HCT116 (cell line): ENCODE measurements at regions of chr16 and their contacts with region 1.

Region 1: GRCh38 chr16:69396187-69397061 is 10.6 kb upstream of the TERF2 start:
- DNase-seq: peak; percentile 88
- ATAC-seq: peak; percentile 21
- H3K4me3 ChIP-seq: peak overlapping the region in 1 of 2 experiments; percentile 16; a peak in 1 of 4 replicates
- H3K27ac ChIP-seq: peak overlapping the region; percentile 99
- H3K4me1 ChIP-seq: peaks cover 90 to 97% of the 10 kb centered on the region in 2 experiments
- H3K27me3 ChIP-seq: no peaks in the 10 kb centered on the region
- CTCF ChIP-seq: peak; percentile 63 to 71 (median 63); a peak in 4 of 6 replicates
- POLR2A ChIP-seq: no peak
- RAD21 ChIP-seq: peak; percentile 86

Region 2: GRCh38 chr16:69186642-69187445 is 209.6 kb before region 1 on chr16 and contains the start of gene SNTB2:
- CTCF ChIA-PET with region 1: no interaction called
- POLR2A ChIA-PET with region 1: no interaction called
- RAD21 ChIA-PET with region 1: no interaction called
- intact Hi-C with region 1: no loop called
- DNase-seq: peak; percentile 70
- ATAC-seq: peak; percentile 95
- H3K4me3 ChIP-seq: peak within 1 kb of the TSS; percentile 71 to 76
- H3K27ac ChIP-seq: peak within 1 kb of the TSS; percentile 82
- H3K4me1 ChIP-seq: peaks cover 23 to 41% of the 10 kb centered on the region in 2 experiments
- H3K27me3 ChIP-seq: no peaks in the 10 kb centered on the region
- CTCF ChIP-seq: no peak
- POLR2A ChIP-seq: peak; percentile 89
- RAD21 ChIP-seq: no peak
- total RNA-seq, gene SNTB2: 38.1 TPM

Region 3: DNA sequence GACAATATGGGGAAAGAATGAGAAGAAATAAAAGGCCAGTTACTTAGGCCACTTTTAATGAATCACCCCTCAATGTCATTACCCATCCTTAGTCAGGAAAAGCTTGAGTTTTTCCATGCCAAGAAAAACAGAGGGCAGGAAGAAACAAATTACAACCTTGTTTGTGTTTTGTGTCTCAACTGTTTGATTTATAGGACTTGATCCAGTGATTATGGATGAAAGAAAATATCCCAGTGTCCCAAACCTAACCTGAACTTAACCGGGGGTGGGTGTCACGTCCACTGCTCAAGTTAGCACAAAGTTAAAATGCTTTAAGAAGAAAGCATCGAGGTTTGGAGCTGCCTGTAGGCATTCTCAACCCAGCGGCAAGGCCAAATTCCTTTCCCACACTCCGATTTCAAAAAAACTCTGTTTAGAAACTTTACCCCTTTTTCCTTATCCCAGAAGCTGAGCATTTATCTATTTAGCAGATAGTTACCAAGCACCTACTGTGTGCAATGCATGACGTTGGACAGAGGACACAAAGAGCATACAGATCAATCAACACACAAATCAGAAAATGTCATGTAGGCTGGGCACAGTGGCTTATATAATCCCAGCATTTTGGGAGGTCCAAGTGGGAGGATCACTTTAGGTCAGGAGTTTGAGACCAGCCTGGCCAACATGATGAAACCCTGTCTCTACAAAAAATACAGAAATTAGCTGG is 14.0 kb after region 1 on chr16:
- CTCF ChIA-PET with region 1: interaction called, 20 read pairs
- POLR2A ChIA-PET with region 1: interaction called, 65 read pairs
- RAD21 ChIA-PET with region 1: no interaction called
- intact Hi-C with region 1: no loop called
- DNase-seq: peak; percentile 83
- ATAC-seq: peak; percentile 15
- H3K4me3 ChIP-seq: peak overlapping the region in 1 of 2 experiments; percentile 20; a peak in 2 of 4 replicates
- H3K27ac ChIP-seq: peak overlapping the region; percentile 99
- H3K4me1 ChIP-seq: peaks cover 64 to 95% of the 10 kb centered on the region in 2 experiments
- H3K27me3 ChIP-seq: no peaks in the 10 kb centered on the region
- CTCF ChIP-seq: no peak
- POLR2A ChIP-seq: no peak
- RAD21 ChIP-seq: no peak

Region 4: DNA sequence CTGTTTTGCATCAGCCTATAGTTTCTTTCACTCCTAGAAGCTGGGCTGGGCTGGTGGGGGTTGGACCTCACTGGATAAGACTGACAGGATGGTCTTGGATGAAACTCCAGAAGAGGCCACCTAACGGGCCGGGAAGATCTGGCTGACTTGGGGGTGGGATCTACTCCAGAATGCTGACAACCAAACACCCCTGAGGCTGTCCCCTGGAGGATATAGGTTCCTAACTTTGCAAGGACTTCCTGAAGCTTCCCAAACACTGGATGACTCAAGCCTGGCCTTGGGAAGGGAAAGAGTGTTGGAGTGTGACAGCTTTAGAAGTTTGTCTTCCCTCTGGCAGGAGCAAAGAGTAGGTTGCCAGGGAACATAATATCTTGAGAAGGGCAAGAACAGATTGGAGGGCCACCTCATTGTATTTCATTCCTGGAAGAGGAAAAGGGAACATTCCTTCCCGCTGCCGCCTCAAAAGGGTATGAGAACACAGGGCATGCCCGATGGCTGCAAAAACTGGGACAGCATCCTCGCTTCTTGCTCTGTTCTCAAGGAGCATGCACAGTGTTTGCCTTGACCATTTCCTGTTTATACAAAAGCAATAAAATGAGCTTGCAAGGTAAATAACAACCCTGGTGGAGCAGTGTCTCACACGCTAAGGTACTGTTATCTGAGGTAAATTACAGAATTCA is 21.2 kb after region 1 on chr16:
- CTCF ChIA-PET with region 1: interaction called, 5 read pairs
- POLR2A ChIA-PET with region 1: interaction called, 15 read pairs
- RAD21 ChIA-PET with region 1: no interaction called
- intact Hi-C with region 1: no loop called
- DNase-seq: no peak
- ATAC-seq: peak; percentile 74
- H3K4me3 ChIP-seq: no peak overlapping the region
- H3K27ac ChIP-seq: peak overlapping the region; percentile 99
- H3K4me1 ChIP-seq: peaks cover 60 to 73% of the 10 kb centered on the region in 2 experiments
- H3K27me3 ChIP-seq: no peaks in the 10 kb centered on the region
- CTCF ChIP-seq: no peak
- POLR2A ChIP-seq: peak; percentile 45
- RAD21 ChIP-seq: no peak

Region 5: GRCh38 chr16:69465083-69465721 is 68.8 kb after region 1 on chr16:
- CTCF ChIA-PET with region 1: interaction called, 10 read pairs
- POLR2A ChIA-PET with region 1: no interaction called
- RAD21 ChIA-PET with region 1: no interaction called
- intact Hi-C with region 1: no loop called
- DNase-seq: no peak
- ATAC-seq: peak; percentile 61; the same call in 1 of the 2 replicates
- H3K4me3 ChIP-seq: no peak overlapping the region
- H3K27ac ChIP-seq: peak overlapping the region; percentile 83
- H3K4me1 ChIP-seq: peaks cover 81% of the 10 kb centered on the region in 2 experiments
- H3K27me3 ChIP-seq: no peaks in the 10 kb centered on the region
- CTCF ChIP-seq: no peak
- POLR2A ChIP-seq: no peak
- RAD21 ChIP-seq: peak; percentile 48

Region 6: DNA sequence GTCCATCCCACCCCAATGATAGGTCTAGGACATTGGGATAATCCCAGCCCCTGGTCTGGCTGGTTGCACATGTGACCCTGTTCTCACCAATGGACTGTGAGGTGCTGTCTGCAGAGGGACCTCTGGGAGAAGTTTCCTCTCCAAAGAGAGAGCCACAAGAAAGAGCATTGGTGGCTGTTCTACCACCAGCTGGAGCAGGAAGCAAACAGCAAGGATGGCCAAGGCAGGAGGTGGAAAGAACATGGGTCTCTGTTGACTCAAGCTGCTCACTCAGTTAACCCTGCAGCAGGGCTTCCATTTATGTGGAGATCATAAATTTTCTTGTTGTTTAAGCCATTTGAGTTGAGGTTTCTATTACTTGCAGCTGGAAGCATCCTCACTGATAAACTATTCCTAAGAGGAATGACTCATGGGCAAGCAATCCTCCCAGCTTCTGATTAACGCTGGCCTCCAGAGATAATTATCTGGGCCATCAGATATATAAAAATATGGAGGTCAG is 80.5 kb after region 1 on chr16:
- CTCF ChIA-PET with region 1: no interaction called
- POLR2A ChIA-PET with region 1: interaction called, 3 read pairs
- RAD21 ChIA-PET with region 1: interaction called in 1 of 2 experiments, 3 read pairs
- intact Hi-C with region 1: loop called (anchors 5 kb)
- DNase-seq: peak; percentile 50
- ATAC-seq: peak; percentile 85
- H3K4me3 ChIP-seq: peak overlapping the region in 1 of 2 experiments; percentile 21; a peak in 2 of 4 replicates
- H3K27ac ChIP-seq: peak overlapping the region; percentile 83
- H3K4me1 ChIP-seq: peaks cover 85 to 93% of the 10 kb centered on the region in 2 experiments
- H3K27me3 ChIP-seq: no peaks in the 10 kb centered on the region
- CTCF ChIP-seq: no peak
- POLR2A ChIP-seq: no peak
- RAD21 ChIP-seq: peak; percentile 15; the same call in 1 of the 2 replicates

Region 7: GRCh38 chr16:69565671-69566239 is 169.3 kb after region 1 on chr16 and contains the start of gene NFAT5:
- CTCF ChIA-PET with region 1: interaction called, 3 read pairs
- POLR2A ChIA-PET with region 1: no interaction called
- RAD21 ChIA-PET with region 1: no interaction called
- intact Hi-C with region 1: loop called (anchors 5 kb)
- DNase-seq: peak; percentile 42
- ATAC-seq: peak; percentile 78
- H3K4me3 ChIP-seq: peak within 1 kb of the TSS; percentile 78 to 91
- H3K27ac ChIP-seq: peak within 1 kb of the TSS; percentile 99
- H3K4me1 ChIP-seq: peaks cover 42 to 44% of the 10 kb centered on the region in 2 experiments
- H3K27me3 ChIP-seq: no peaks in the 10 kb centered on the region
- CTCF ChIP-seq: no peak
- POLR2A ChIP-seq: peak; percentile 53
- RAD21 ChIP-seq: peak; percentile 36; the same call in 1 of the 2 replicates
- total RNA-seq, gene NFAT5: 67.4 TPM

Region 8: DNA sequence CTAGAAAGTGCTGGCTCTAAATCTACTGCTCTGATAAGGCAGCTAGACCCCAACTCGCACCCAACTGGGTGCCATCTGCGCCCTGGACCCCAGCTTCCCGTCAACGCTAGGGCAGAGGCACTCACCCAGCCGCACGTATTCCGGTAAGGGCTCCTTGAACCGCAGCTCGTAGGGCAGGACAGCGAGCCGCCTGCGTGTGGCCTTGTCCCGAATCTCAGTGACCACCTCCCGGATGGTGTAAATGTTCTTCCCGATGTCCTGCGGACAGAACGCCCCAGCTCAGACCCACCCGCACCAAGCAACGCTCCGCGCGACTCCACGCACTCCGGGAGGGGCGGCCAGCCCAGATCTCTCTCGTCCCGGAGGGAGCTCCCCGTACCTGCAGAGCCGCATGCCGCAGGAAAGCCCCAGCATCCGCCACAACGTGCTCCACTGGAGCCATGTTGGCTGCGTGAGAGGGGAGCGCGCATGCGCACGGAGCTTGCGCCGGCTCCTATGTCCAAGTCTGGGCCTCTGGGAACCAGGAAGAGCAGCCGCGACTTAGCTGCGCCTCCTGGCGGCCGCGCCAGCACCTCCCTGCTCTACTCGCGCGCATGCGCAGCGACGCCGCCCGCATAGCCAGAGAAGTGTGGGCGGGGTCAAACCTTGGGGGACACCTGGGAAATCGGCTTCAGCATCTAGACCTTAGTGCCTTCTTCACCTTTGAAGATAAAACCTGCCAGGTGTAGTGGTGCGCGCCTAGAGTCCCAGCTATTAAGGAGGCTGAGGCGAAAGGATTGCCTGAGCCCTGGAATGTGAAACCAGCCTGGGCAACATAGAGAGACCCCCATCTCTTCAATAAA is 358.3 kb after region 1 on chr16 and contains the start of gene NOB1:
- CTCF ChIA-PET with region 1: interaction called, 20 read pairs
- POLR2A ChIA-PET with region 1: no interaction called
- RAD21 ChIA-PET with region 1: interaction called in 1 of 2 experiments, 3 read pairs
- intact Hi-C with region 1: loop called (anchors 2 kb)
- DNase-seq: peak; percentile 93
- ATAC-seq: peak; percentile 96
- H3K4me3 ChIP-seq: peak within 1 kb of the TSS; percentile 91 to 92
- H3K27ac ChIP-seq: peak within 1 kb of the TSS; percentile 76
- H3K4me1 ChIP-seq: peaks cover 7 to 14% of the 10 kb centered on the region in 2 experiments
- H3K27me3 ChIP-seq: no peaks in the 10 kb centered on the region
- CTCF ChIP-seq: peak; percentile 88 to 97 (median 94)
- POLR2A ChIP-seq: peak; percentile 76
- RAD21 ChIP-seq: peak; percentile 98
- total RNA-seq, gene NOB1: 172 TPM